Mammary epithelial cell (primary cell): ENCODE measurements at regions of chr22 and their contacts with region 1.

Region 1: GRCh38 chr22:36977947-36978660 is 41.1 kb downstream of the TST start:
- DNase-seq: peak; percentile 61
- H3K4me3 ChIP-seq: peak overlapping the region in 1 of 3 experiments; percentile 3
- H3K27ac ChIP-seq: no peak overlapping the region
- H3K4me1 ChIP-seq: no peaks in the 10 kb centered on the region
- H3K27me3 ChIP-seq: no peaks in the 10 kb centered on the region
- CTCF ChIP-seq: peak; percentile 73 to 83

Region 2: DNA sequence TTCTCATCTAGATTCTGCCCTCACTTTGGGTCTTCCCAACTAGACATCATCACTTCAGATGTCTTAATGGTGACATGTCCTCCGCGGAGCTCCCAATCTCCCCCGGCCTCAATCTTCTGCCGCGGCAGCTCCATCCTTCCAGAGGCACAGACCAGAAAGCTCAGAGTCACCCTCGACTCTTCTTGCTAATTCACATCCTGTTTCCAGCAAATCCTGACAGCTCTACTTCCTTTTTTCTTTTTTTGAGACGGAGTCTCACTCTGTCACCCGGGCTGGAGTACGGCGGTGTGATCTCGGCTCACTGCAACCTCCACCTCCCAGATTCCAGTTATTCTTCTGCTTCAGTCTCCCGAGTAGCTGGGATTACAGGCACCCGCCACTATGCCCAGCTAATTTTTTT is 329.0 kb before region 1 on chr22:
- CTCF ChIA-PET with region 1: no interaction called
- dilution Hi-C with region 1: no loop called
- in situ Hi-C with region 1: no loop called
- intact Hi-C with region 1: no loop called
- DNase-seq: no peak
- H3K4me3 ChIP-seq: no peak overlapping the region
- H3K27ac ChIP-seq: no peak overlapping the region
- H3K4me1 ChIP-seq: no peaks in the 10 kb centered on the region
- H3K27me3 ChIP-seq: peaks cover 2% of the 10 kb centered on the region
- CTCF ChIP-seq: no peak

Region 3: GRCh38 chr22:36757668-36758211 is 220.4 kb before region 1 on chr22:
- CTCF ChIA-PET with region 1: no interaction called
- dilution Hi-C with region 1: no loop called
- in situ Hi-C with region 1: no loop called
- intact Hi-C with region 1: loop called (anchors 1 kb)
- DNase-seq: peak; percentile 50
- H3K4me3 ChIP-seq: no peak overlapping the region
- H3K27ac ChIP-seq: no peak overlapping the region
- H3K4me1 ChIP-seq: peaks cover 2% of the 10 kb centered on the region
- H3K27me3 ChIP-seq: no peaks in the 10 kb centered on the region
- CTCF ChIP-seq: peak; percentile 87 to 91

Region 4: GRCh38 chr22:36781656-36782627 is 196.2 kb before region 1 on chr22:
- CTCF ChIA-PET with region 1: no interaction called
- dilution Hi-C with region 1: no loop called
- in situ Hi-C with region 1: loop called (anchors 10 kb)
- intact Hi-C with region 1: loop called (anchors 1 kb)
- DNase-seq: peak; percentile 77
- H3K4me3 ChIP-seq: no peak overlapping the region
- H3K27ac ChIP-seq: no peak overlapping the region
- H3K4me1 ChIP-seq: peaks cover 4% of the 10 kb centered on the region
- H3K27me3 ChIP-seq: no peaks in the 10 kb centered on the region
- CTCF ChIP-seq: peak; percentile 86 to 87

Region 5: DNA sequence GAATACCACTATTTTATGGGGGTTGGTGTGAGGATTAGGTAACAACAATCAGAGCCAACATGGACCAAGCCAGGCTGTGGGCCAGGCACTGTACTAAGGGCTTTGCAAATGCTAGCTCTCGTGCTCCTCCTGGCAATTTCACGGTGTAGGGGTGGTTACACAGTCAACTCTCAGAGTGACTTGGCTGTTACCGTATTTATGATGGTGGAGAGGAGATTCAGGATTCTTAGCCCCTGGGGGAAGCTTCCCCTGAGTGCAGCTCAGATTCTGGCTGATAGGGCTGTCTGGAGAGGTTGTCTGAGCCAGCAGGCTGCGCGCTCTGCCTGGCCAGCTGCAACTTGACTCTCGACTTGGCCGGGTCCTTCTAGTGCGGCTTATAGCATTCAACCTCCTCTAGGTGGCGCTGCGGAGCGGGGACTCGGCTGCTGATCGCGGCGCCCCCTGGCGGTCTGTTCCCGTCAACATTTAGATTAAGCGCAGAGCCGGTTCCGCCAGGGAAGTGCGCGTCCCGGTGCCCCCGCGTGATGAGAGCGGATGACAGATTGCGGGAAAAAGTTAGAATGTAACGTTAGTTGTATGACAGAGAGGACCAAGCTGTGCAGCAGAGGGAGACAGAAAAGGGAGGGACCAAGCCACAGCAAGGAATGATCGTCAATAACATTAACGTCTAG is 121.8 kb before region 1 on chr22:
- CTCF ChIA-PET with region 1: no interaction called
- dilution Hi-C with region 1: no loop called
- in situ Hi-C with region 1: loop called (anchors 5 to 10 kb)
- intact Hi-C with region 1: loop called (anchors 1 kb)
- DNase-seq: peak; percentile 71
- H3K4me3 ChIP-seq: no peak overlapping the region
- H3K27ac ChIP-seq: no peak overlapping the region
- H3K4me1 ChIP-seq: peaks cover 8% of the 10 kb centered on the region
- H3K27me3 ChIP-seq: no peaks in the 10 kb centered on the region
- CTCF ChIP-seq: peak; percentile 99 to 100

Region 6: GRCh38 chr22:36873680-36874537 is 104.2 kb before region 1 on chr22:
- CTCF ChIA-PET with region 1: no interaction called
- dilution Hi-C with region 1: no loop called
- in situ Hi-C with region 1: loop called in 1 of 2 experiments (anchors 10 kb)
- intact Hi-C with region 1: loop called (anchors 1 kb)
- DNase-seq: peak; percentile 88
- H3K4me3 ChIP-seq: no peak overlapping the region
- H3K27ac ChIP-seq: peak overlapping the region; percentile 64
- H3K4me1 ChIP-seq: peaks cover 42% of the 10 kb centered on the region
- H3K27me3 ChIP-seq: no peaks in the 10 kb centered on the region
- CTCF ChIP-seq: peak; percentile 63 to 72

Region 7: GRCh38 chr22:36936362-36937071 is 41.6 kb before region 1 on chr22:
- CTCF ChIA-PET with region 1: no interaction called
- dilution Hi-C with region 1: no loop called
- in situ Hi-C with region 1: no loop called
- intact Hi-C with region 1: no loop called
- DNase-seq: no peak
- H3K4me3 ChIP-seq: no peak overlapping the region
- H3K27ac ChIP-seq: no peak overlapping the region
- H3K4me1 ChIP-seq: no peaks in the 10 kb centered on the region
- H3K27me3 ChIP-seq: peaks cover 6% of the 10 kb centered on the region
- CTCF ChIP-seq: no peak

Region 8: DNA sequence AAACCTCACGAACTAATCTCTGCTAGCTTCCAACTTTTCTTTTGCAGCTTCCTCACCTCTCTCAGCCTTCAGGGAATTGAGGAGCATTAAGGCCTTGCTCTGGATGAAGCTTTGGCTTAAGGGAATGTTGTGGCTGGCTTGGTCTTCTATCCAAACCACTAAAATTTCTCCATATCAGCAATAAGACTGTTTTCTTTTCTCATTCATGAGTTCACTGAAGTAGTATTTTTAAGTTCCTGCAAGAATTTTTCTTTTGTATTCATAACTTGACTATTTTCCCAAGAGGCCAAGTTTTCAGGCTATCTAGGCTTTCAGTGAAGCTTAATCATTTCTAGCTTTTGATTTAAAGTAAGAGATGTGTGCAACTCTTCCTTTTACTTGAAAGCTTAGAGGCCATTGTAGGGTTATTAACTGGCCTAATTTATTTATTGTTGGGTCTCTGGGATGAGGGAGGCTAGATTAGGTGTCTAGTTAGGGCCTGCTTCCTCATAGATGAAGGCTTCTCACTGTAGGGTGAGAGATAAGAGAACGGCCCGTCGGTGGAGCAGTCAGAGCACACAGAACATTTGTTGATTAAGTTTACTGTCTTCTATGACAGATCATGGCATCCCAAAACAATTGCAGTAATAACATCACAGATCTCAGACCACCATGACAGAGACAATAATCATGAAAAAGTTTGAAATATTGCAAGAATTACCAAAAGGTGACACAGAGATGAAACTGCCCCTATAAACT is 31.5 kb before region 1 on chr22:
- CTCF ChIA-PET with region 1: interaction called, 12 read pairs
- dilution Hi-C with region 1: no loop called
- in situ Hi-C with region 1: no loop called
- intact Hi-C with region 1: loop called (anchors 2 kb)
- DNase-seq: no peak
- H3K4me3 ChIP-seq: no peak overlapping the region
- H3K27ac ChIP-seq: no peak overlapping the region
- H3K4me1 ChIP-seq: no peaks in the 10 kb centered on the region
- H3K27me3 ChIP-seq: no peaks in the 10 kb centered on the region
- CTCF ChIP-seq: peak in 1 of 2 donors; percentile 6

Region 9: DNA sequence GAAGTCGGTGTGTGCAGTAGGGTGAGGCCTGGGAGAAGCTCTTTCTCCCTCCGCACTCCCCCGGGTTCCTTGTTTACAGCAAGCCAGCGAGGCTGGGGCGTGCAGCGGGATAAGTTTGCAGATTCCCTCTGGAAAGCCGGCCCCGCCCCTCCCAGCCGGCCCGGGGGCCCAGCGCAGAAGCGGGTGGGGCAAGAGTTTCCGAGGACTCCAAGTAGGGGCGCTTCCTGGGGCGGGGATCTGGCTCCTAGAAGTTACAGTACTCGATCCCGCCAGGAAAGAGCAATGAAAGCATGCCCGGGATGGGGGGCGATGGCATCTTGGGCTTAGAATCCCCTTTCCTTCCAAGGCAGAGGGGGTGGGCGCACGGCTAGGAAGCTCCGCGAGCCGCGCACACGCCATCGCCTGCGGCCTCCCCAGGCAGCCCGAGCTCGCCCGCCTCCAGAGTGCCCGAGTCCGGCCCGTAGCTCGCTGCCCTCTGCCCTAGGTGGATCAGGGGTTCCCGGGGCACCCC is 40.7 kb after region 1 on chr22:
- CTCF ChIA-PET with region 1: no interaction called
- dilution Hi-C with region 1: no loop called
- in situ Hi-C with region 1: no loop called
- intact Hi-C with region 1: no loop called
- DNase-seq: peak; percentile 25
- H3K4me3 ChIP-seq: peak overlapping the region; percentile 76 to 96 (median 76)
- H3K27ac ChIP-seq: peak overlapping the region; percentile 61
- H3K4me1 ChIP-seq: peaks cover 10% of the 10 kb centered on the region
- H3K27me3 ChIP-seq: no peaks in the 10 kb centered on the region
- CTCF ChIP-seq: no peak